ENCODE measurements at regions of chr1 and their contacts with region 1.

Region 1: DNA sequence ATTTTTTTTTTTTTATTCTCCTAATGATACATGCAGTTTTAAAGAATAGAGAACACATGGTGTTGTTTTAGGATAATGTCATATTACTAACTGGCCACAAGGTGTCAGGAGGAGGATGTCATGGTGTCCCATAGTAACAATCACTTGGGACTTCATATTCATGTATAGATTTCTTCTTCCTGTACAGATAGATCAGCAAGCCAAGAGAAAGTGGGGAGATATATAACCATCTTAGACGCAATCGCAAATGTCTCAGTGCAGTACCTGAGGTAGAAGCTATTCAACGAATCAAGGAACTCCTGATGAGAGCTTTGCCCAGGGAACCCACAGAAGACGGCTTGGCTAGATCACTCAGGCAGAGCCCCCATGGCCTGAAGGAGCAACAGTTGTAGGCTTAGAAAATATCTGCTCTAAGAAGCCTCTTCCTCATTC is 12.3 kb downstream of the OR2T11 start:
- DNase-seq: peak; percentile 68
- ATAC-seq: peak; percentile 93
- H3K4me3 ChIP-seq: no peak overlapping the region
- H3K4me3 Mint-ChIP-seq: peak overlapping the region; percentile 56
- H3K27ac ChIP-seq: peak overlapping the region; percentile 21 to 25
- H3K27ac Mint-ChIP-seq: peak overlapping the region; percentile 90
- H3K4me1 ChIP-seq: peaks cover 6 to 7% of the 10 kb centered on the region in 2 donors
- H3K4me1 Mint-ChIP-seq: peaks cover 11% of the 10 kb centered on the region
- H3K27me3 ChIP-seq: no peaks in the 10 kb centered on the region
- H3K27me3 Mint-ChIP-seq: no peaks in the 10 kb centered on the region
- CTCF ChIP-seq: peak; percentile 89

Region 2: DNA sequence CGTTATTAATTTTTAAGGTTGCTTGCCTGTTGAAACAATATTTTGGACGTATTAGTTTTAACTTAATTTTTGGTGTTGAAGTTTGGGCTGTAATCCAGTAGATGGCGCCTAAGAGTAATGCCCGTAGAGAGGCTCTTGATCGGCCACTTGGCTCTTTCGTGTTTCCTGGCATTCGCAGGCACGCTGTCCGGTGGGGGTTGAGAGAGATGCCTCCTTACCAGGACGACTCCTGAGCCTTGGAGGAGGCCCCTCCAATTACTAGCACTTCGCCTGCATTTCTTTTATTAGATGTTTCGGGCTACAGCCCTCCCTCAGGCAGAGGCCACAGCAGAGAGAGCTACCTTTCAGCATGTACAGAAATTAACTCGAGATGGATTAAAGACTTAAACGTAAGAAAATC is 379.4 kb before region 1 on chr1:
- CTCF ChIA-PET with region 1: no interaction called
- POLR2A ChIA-PET with region 1: no interaction called
- intact Hi-C with region 1: loop called (anchors 10 kb)
- DNase-seq: peak; percentile 65
- ATAC-seq: peak; percentile 36
- H3K4me3 ChIP-seq: no peak overlapping the region
- H3K4me3 Mint-ChIP-seq: no peak overlapping the region
- H3K27ac ChIP-seq: no peak overlapping the region
- H3K27ac Mint-ChIP-seq: no peak overlapping the region
- H3K4me1 ChIP-seq: peaks cover 3 to 4% of the 10 kb centered on the region in 2 donors
- H3K4me1 Mint-ChIP-seq: peaks cover 2% of the 10 kb centered on the region
- H3K27me3 ChIP-seq: peaks cover 0 to 8% (median 2%) of the 10 kb centered on the region in 4 experiments
- H3K27me3 Mint-ChIP-seq: peaks cover 25% of the 10 kb centered on the region
- CTCF ChIP-seq: peak; percentile 87

Region 3: GRCh38 chr1:248404024-248404423 is 218.6 kb before region 1 on chr1:
- CTCF ChIA-PET with region 1: interaction called, 4 read pairs
- POLR2A ChIA-PET with region 1: no interaction called
- intact Hi-C with region 1: loop called (anchors 2 kb)
- DNase-seq: peak; percentile 71
- ATAC-seq: no peak
- H3K4me3 ChIP-seq: no peak overlapping the region
- H3K4me3 Mint-ChIP-seq: no peak overlapping the region
- H3K27ac ChIP-seq: no peak overlapping the region
- H3K27ac Mint-ChIP-seq: no peak overlapping the region
- H3K4me1 ChIP-seq: no peaks in the 10 kb centered on the region
- H3K4me1 Mint-ChIP-seq: no peaks in the 10 kb centered on the region
- H3K27me3 ChIP-seq: no peaks in the 10 kb centered on the region
- H3K27me3 Mint-ChIP-seq: no peaks in the 10 kb centered on the region
- CTCF ChIP-seq: peak; percentile 18

Region 4: DNA sequence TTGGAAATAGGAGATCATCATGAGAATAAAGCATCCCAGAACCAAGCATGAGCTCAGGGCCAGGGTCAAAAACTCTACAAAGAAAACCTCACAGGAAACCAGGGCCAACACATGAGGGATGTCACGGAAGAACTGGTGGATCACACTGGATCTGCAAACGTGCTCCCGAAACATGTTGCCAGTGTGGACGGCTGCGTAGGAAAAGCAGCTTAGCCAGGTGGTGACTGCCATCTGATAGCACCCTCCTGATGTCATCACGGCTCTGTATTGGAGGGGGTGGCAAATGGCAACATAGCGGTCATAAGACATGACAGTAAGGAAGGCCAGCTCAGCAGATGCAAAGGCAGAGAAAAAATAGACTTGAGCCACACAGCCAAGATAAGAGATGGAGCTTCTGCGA is 59.1 kb after region 1 on chr1:
- CTCF ChIA-PET with region 1: interaction called, 125 read pairs
- POLR2A ChIA-PET with region 1: no interaction called
- intact Hi-C with region 1: loop called (anchors 1 kb)
- DNase-seq: no peak
- ATAC-seq: no peak
- H3K4me3 ChIP-seq: no peak overlapping the region
- H3K4me3 Mint-ChIP-seq: no peak overlapping the region
- H3K27ac ChIP-seq: no peak overlapping the region
- H3K27ac Mint-ChIP-seq: no peak overlapping the region
- H3K4me1 ChIP-seq: peaks cover 0 to 2% of the 10 kb centered on the region in 2 donors
- H3K4me1 Mint-ChIP-seq: peaks cover under 1% of the 10 kb centered on the region
- H3K27me3 ChIP-seq: peaks cover 0 to 6% (median 0%) of the 10 kb centered on the region in 4 experiments
- H3K27me3 Mint-ChIP-seq: peaks cover 12% of the 10 kb centered on the region
- CTCF ChIP-seq: no peak

Region 5: GRCh38 chr1:248686815-248687214 is 64.2 kb after region 1 on chr1:
- CTCF ChIA-PET with region 1: interaction called, 125 read pairs
- POLR2A ChIA-PET with region 1: no interaction called
- intact Hi-C with region 1: loop called (anchors 1 kb)
- DNase-seq: peak; percentile 75
- ATAC-seq: peak; percentile 79
- H3K4me3 ChIP-seq: no peak overlapping the region
- H3K4me3 Mint-ChIP-seq: peak overlapping the region; percentile 8
- H3K27ac ChIP-seq: no peak overlapping the region
- H3K27ac Mint-ChIP-seq: no peak overlapping the region
- H3K4me1 ChIP-seq: peaks cover 0 to 8% of the 10 kb centered on the region in 2 donors
- H3K4me1 Mint-ChIP-seq: peaks cover 15% of the 10 kb centered on the region
- H3K27me3 ChIP-seq: no peaks in the 10 kb centered on the region
- H3K27me3 Mint-ChIP-seq: peaks cover 2% of the 10 kb centered on the region
- CTCF ChIP-seq: peak; percentile 78

Region 6: DNA sequence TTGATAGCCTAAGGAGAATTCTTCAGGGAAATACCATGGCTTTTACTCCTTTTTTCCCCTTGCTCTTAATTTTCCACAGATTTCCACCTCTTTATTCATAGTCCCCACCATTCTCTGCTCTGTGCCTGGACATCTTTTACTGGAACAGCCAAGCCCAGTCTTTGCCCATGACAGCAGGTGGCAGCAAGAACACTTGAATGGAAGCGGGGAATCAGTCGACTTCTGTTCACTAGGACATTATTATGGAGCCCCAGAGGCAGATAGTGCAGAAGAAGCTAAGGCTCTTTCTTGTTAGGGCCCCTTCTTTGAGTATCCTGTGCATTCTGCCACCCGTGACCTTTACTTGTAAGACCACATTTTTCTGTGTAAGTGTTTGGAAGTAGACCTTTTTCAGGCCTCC is 73.7 kb after region 1 on chr1:
- CTCF ChIA-PET with region 1: interaction called, 20 read pairs
- POLR2A ChIA-PET with region 1: no interaction called
- intact Hi-C with region 1: no loop called
- DNase-seq: peak; percentile 32
- ATAC-seq: peak; percentile 24
- H3K4me3 ChIP-seq: no peak overlapping the region
- H3K4me3 Mint-ChIP-seq: no peak overlapping the region
- H3K27ac ChIP-seq: peak overlapping the region in 1 of 2 donors; percentile 27
- H3K27ac Mint-ChIP-seq: peak overlapping the region; percentile 42
- H3K4me1 ChIP-seq: peaks cover 12 to 15% of the 10 kb centered on the region in 2 donors
- H3K4me1 Mint-ChIP-seq: peaks cover 13% of the 10 kb centered on the region
- H3K27me3 ChIP-seq: no peaks in the 10 kb centered on the region
- H3K27me3 Mint-ChIP-seq: no peaks in the 10 kb centered on the region
- CTCF ChIP-seq: peak; percentile 4

Region 7: GRCh38 chr1:248837794-248838356 is 215.3 kb after region 1 on chr1 and contains the start of gene ZNF672:
- CTCF ChIA-PET with region 1: interaction called, 4 read pairs
- POLR2A ChIA-PET with region 1: no interaction called
- intact Hi-C with region 1: loop called (anchors 1 kb)
- DNase-seq: peak; percentile 94
- ATAC-seq: peak; percentile 82
- H3K4me3 ChIP-seq: peak within 1 kb of the TSS; percentile 65 to 94 (median 92)
- H3K4me3 Mint-ChIP-seq: no peak within 1 kb of the TSS
- H3K27ac ChIP-seq: peak within 1 kb of the TSS; percentile 97 to 99
- H3K27ac Mint-ChIP-seq: no peak within 1 kb of the TSS
- H3K4me1 ChIP-seq: peaks cover 42 to 47% of the 10 kb centered on the region in 2 donors
- H3K4me1 Mint-ChIP-seq: peaks cover 36% of the 10 kb centered on the region
- H3K27me3 ChIP-seq: no peaks in the 10 kb centered on the region
- H3K27me3 Mint-ChIP-seq: no peaks in the 10 kb centered on the region
- CTCF ChIP-seq: no peak
- total RNA-seq, gene ZNF672: 56.3 and 62.2 TPM in 2 replicates

Measured in B cell (primary cell).